ENCODE measurements at regions of chr18 and their contacts with region 1.

Region 1: DNA sequence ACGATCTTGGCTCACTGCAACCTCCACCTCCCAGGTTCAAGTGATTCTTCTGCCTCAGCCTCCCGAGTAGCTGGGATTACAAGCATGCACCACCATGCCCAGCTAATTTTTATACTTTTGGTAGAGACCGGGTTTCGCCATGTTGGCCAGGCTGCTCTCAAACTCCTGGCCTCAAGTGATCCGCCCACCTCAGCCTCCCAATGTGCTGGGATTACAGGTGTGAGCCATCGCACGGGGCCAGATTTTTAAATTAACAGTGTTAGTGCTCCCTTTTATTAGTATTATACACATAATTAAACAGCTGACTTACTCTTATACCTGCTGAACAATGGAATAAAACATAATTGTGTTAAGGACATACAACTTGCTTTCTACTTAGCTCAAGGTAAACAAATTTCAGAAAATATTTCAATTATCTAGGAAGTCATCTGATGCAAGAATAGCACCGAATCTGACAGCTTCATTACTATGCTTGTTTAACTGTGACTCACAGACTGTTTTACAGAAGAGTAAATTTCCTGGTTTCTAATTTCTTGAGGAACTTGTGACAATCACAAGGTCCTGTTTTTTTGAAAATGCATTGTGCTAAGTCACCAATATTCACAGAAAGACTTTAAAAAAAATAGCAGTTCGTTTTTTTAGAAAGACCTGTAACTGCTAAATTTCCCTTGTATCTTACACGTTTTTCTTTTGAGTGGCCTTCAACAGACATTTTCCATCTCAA is 51.2 kb downstream of the SPIRE1 start:
- DNase-seq: peak; percentile 14
- H3K4me3 Mint-ChIP-seq: peak overlapping the region; percentile 54
- H3K27ac Mint-ChIP-seq: peak overlapping the region; percentile 90
- H3K4me1 Mint-ChIP-seq: peaks cover 75% of the 10 kb centered on the region
- H3K27me3 Mint-ChIP-seq: no peaks in the 10 kb centered on the region
- CTCF ChIP-seq: no peak

Region 2: GRCh38 chr18:11902522-11903292 is 704.0 kb before region 1 on chr18:
- CTCF ChIA-PET with region 1: no interaction called
- intact Hi-C with region 1: no loop called
- DNase-seq: no peak
- H3K4me3 Mint-ChIP-seq: no peak overlapping the region
- H3K27ac Mint-ChIP-seq: no peak overlapping the region
- H3K4me1 Mint-ChIP-seq: peaks cover 16% of the 10 kb centered on the region
- H3K27me3 Mint-ChIP-seq: no peaks in the 10 kb centered on the region
- CTCF ChIP-seq: no peak

Region 3: DNA sequence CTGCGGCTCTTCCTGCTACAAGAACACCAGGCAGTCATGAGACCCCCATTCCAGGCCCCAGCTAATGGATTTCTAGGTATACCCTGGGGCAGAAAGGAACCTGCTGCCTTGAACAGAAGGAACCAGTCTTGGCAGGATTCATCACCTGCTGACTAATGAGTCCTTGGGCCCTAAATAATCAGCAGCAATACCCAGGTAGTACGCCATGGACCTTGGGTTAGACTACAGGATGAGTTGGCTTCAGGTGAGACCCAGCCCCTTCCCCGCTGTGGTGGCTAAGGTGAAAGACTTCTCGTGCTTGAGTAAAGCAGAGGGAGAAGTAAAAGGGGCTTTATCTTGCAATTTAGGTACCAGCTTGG is 53.9 kb before region 1 on chr18:
- CTCF ChIA-PET with region 1: interaction called, 14 read pairs
- intact Hi-C with region 1: no loop called
- DNase-seq: peak; percentile 15
- H3K4me3 Mint-ChIP-seq: peak overlapping the region; percentile 57
- H3K27ac Mint-ChIP-seq: peak overlapping the region; percentile 76
- H3K4me1 Mint-ChIP-seq: peaks cover 44% of the 10 kb centered on the region
- H3K27me3 Mint-ChIP-seq: no peaks in the 10 kb centered on the region
- CTCF ChIP-seq: no peak

Region 4: DNA sequence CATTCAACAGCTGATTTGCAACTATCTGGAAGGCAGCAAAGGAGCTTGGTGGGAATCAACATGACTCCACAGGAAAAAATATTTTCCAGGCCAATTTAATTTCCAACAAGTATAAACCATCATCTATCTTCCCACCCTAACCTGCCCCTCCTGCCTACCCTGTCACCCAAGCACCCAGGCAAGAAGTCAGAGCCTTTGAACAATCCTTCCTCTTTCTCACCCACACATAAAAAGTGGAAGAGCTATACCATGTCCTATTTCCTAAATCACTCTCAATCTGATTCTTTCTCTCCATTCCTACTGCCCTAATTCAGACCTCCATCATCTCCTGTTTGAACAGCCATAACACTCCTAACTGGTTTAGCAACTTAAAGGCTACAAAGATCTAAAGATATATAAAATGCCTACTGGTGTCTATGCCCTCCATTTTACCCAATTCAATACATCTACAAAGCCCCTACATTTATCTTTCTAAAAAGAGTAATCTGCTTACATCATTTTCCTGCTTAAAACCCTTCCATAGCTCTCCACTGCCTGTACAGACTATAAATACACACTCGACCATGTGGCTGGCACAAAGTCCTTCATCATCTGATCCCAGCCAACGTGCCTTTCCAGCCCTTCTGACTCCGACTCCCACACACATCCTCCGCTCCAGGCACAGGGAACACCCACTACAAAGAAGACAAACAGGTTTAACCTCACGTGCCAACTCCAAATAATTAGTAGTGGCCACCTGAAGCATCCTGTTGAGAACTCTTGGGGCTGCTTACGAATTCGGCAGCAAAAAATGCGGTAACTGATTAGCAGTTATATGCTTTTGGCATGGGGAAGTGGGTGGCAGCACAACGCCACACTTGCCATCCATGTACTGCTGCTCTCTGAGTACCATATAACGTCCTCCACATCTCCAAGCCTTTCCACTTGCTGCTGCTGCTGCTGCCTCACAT is 38.8 kb after region 1 on chr18:
- CTCF ChIA-PET with region 1: no interaction called
- intact Hi-C with region 1: loop called (anchors 5 kb)
- DNase-seq: peak; percentile 57
- H3K4me3 Mint-ChIP-seq: peak overlapping the region; percentile 47
- H3K27ac Mint-ChIP-seq: peak overlapping the region; percentile 61
- H3K4me1 Mint-ChIP-seq: peaks cover 44% of the 10 kb centered on the region
- H3K27me3 Mint-ChIP-seq: no peaks in the 10 kb centered on the region
- CTCF ChIP-seq: no peak

Region 5: DNA sequence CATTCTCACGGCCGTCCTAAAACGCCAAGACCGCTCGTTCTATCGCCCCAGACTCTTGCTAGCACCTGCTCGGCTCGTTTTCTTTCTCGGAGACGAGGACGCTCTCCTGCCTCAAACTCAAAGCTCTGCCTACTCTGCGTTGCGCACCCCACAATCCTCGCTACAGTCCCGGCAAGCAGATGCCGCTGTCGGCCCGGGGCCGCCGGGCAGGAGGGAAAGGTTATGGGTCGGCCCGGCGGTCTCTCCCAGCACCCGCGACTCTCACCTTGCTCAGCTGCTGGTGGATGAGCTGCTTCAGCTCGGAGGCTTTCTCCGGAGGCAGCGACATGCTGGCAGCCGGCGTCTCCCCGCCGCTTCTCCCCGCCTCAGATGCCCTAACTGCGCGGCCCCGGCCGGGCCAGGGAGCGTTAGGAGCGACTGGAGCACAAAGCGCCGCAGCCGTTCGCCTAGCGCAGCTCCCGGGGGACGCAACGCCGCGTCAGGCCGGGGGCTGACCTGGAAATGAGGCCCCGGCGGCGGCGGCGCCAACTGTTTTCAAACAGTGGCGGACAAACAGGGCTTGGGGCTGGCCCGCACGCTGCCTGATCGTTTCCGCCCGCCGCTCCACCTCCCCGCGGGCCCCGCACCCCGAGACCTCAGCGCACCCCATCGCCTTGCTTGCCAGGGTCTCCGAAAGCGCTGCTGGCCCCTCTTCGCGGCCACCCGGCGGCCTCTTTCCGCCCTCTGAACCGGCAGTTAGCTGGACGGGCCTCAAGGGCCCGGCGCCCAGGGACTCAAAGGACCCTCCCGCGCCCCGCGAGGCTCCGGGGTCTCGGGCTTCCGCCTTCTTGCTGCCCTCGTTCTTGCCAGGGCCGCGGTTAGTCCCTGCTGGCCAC is 95.7 kb after region 1 on chr18 and contains the starts of genes CEP76 and PSMG2:
- CTCF ChIA-PET with region 1: no interaction called
- intact Hi-C with region 1: loop called (anchors 5 kb)
- DNase-seq: peak; percentile 86
- H3K4me3 Mint-ChIP-seq: peak within 1 kb of the TSS; percentile 86
- H3K27ac Mint-ChIP-seq: peak within 1 kb of the TSS; percentile 99
- H3K4me1 Mint-ChIP-seq: peaks cover 24% of the 10 kb centered on the region
- H3K27me3 Mint-ChIP-seq: no peaks in the 10 kb centered on the region
- CTCF ChIP-seq: no peak
- total RNA-seq, gene CEP76: 10.1 and 12.7 TPM in 2 replicates
- total RNA-seq, gene PSMG2: 78.6 and 89.6 TPM in 2 replicates

Region 6: GRCh38 chr18:12744103-12744502 is 137.3 kb after region 1 on chr18:
- CTCF ChIA-PET with region 1: no interaction called
- intact Hi-C with region 1: no loop called
- DNase-seq: no peak
- H3K4me3 Mint-ChIP-seq: no peak overlapping the region
- H3K27ac Mint-ChIP-seq: no peak overlapping the region
- H3K4me1 Mint-ChIP-seq: peaks cover 9% of the 10 kb centered on the region
- H3K27me3 Mint-ChIP-seq: peaks cover 4% of the 10 kb centered on the region
- CTCF ChIP-seq: no peak

Measured in Calu3 (cell line).